ENCODE measurements at regions of chr7 and their contacts with region 1.

Region 1: GRCh38 chr7:50687575-50688225 is 95.0 kb downstream of the GRB10 start:
- DNase-seq: no peak
- H3K4me3 ChIP-seq: no peak overlapping the region
- H3K27ac ChIP-seq: no peak overlapping the region
- H3K4me1 ChIP-seq: peaks cover 22% of the 10 kb centered on the region
- H3K27me3 ChIP-seq: no peaks in the 10 kb centered on the region
- CTCF ChIP-seq: no peak

Region 2: GRCh38 chr7:51067757-51068156 is 380.1 kb after region 1 on chr7:
- CTCF ChIA-PET with region 1: no interaction called
- POLR2A ChIA-PET with region 1: no interaction called
- intact Hi-C with region 1: loop called (anchors 5 kb)
- DNase-seq: peak; percentile 57 to 63
- H3K4me3 ChIP-seq: no peak overlapping the region
- H3K27ac ChIP-seq: no peak overlapping the region
- H3K4me1 ChIP-seq: peaks cover 10% of the 10 kb centered on the region; the same call in 1 of the 2 replicates
- H3K27me3 ChIP-seq: no peaks in the 10 kb centered on the region
- CTCF ChIP-seq: peak; percentile 96

Measured in PC-9 (cell line).